ENCODE measurements at regions of chr12 and their contacts with region 1.

Region 1: DNA sequence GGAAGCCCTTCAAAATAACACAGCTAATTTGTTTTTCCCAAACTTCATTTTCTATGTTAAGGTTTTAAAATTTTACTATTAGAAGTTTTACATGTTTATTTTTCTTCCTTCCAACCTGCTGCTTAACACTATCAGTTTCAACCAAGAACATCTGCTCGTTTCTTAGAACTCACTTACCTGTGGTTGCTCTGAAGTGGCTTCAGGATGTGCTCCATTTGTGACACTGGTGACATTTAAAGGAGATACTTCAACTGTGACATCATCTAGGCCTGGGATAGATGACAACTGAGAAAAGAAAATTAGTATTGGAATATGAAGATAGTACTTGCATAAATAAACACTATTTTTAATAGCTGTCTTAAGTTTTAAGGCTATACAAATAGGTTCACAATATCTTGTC is 17.9 kb downstream of the WASHC3 start:
- DNase-seq: peak in 7 of 35 experiments; percentile 9 to 49 (median 24)
- ATAC-seq: peak; percentile 79 to 99 (median 90)
- H3K4me3 ChIP-seq: no peak overlapping the region
- H3K4me3 Mint-ChIP-seq: peak overlapping the region in 1 of 3 donors; percentile 24
- H3K27ac ChIP-seq: no peak overlapping the region
- H3K27ac Mint-ChIP-seq: peak overlapping the region; percentile 74 to 75
- H3K4me1 ChIP-seq: peaks cover 5 to 11% of the 10 kb centered on the region in 2 experiments
- H3K4me1 Mint-ChIP-seq: peaks cover 14 to 21% (median 15%) of the 10 kb centered on the region in 3 donors
- H3K27me3 ChIP-seq: no peaks in the 10 kb centered on the region
- H3K27me3 Mint-ChIP-seq: no peaks in the 10 kb centered on the region

Region 2: DNA sequence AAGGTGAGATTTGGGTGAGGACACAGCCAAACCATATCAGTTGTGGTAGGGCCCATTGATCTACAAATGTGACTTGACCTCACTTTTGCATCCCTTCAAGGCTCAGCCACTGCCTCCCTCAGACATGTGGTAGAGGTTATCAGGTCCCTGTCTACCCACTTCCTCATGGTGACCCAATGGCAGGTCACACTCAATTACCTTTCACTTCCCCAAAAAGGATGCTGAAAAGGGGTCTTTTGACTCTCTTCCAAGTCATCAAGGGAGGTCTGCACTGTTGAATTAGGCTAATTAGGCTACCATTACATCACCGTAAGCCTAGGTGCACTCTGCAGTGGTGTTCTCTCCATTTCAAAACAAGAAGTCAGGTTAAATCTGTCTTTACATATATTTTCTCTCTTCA is 189.2 kb before region 1 on chr12:
- CTCF ChIA-PET with region 1: interaction called in 1 of 2 experiments, 11 read pairs
- POLR2A ChIA-PET with region 1: no interaction called
- DNase-seq: no peak
- ATAC-seq: no peak
- H3K4me3 ChIP-seq: no peak overlapping the region
- H3K4me3 Mint-ChIP-seq: no peak overlapping the region
- H3K27ac ChIP-seq: no peak overlapping the region
- H3K27ac Mint-ChIP-seq: no peak overlapping the region
- H3K4me1 ChIP-seq: no peaks in the 10 kb centered on the region
- H3K4me1 Mint-ChIP-seq: peaks cover 0 to 3% (median 0%) of the 10 kb centered on the region in 3 donors
- H3K27me3 ChIP-seq: no peaks in the 10 kb centered on the region
- H3K27me3 Mint-ChIP-seq: no peaks in the 10 kb centered on the region

Measured in T-cell (primary cell).